ENCODE measurements at regions of chr5 and their contacts with region 1.

Region 1: GRCh38 chr5:134845852-134846640 is at the start of gene C5orf24:
- DNase-seq: peak; percentile 58 to 84
- H3K4me3 ChIP-seq: peak within 1 kb of the TSS; percentile 62 to 88 (median 72)
- H3K27ac ChIP-seq: peak within 1 kb of the TSS; percentile 66
- H3K4me1 ChIP-seq: no peaks in the 10 kb centered on the region
- H3K27me3 ChIP-seq: no peaks in the 10 kb centered on the region
- CTCF ChIP-seq: no peak
- EP300 ChIP-seq: peak in 1 of 2 experiments; percentile 15; a peak in 1 of 3 replicates
- POLR2A ChIP-seq: peak; percentile 82 to 86
- RAD21 ChIP-seq: no peak
- total RNA-seq, gene C5orf24: 19.6 and 20.2 TPM in 2 replicates

Region 2: DNA sequence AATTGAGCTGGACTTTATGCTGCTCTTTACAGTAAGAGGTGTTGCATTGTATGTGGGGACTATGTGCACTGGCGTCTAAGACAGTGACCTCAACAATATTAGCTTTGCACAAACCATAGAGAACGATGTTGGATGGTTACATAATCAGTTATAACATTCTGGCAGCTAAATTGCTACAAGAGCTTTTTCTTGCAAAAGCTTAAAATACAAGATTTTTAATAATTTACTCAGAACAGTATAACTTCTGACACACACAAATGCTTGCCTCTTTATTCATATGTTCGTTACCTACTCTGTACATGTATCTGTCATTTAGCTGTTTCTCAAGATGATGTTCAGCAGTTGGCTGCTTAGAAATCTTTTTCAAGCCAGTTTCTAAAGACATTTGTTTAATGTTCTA is 11.4 kb after region 1 on chr5:
- CTCF ChIA-PET with region 1: interaction called, 37 read pairs
- POLR2A ChIA-PET with region 1: interaction called, 12 read pairs
- DNase-seq: no peak
- H3K4me3 ChIP-seq: no peak overlapping the region
- H3K27ac ChIP-seq: no peak overlapping the region
- H3K4me1 ChIP-seq: no peaks in the 10 kb centered on the region
- H3K27me3 ChIP-seq: no peaks in the 10 kb centered on the region
- CTCF ChIP-seq: no peak
- EP300 ChIP-seq: no peak
- POLR2A ChIP-seq: no peak
- RAD21 ChIP-seq: no peak

Region 3: GRCh38 chr5:134873987-134874830 is 28.2 kb after region 1 on chr5 and contains the start of gene TXNDC15:
- CTCF ChIA-PET with region 1: no interaction called
- POLR2A ChIA-PET with region 1: interaction called, 17 read pairs
- DNase-seq: peak; percentile 61 to 89
- H3K4me3 ChIP-seq: peak within 1 kb of the TSS; percentile 73 to 93 (median 78)
- H3K27ac ChIP-seq: peak within 1 kb of the TSS; percentile 79; the same call in 1 of the 2 replicates
- H3K4me1 ChIP-seq: peaks cover 0 to 12% (median 8%) of the 10 kb centered on the region in 4 experiments; a peak in 6 of 7 replicates
- H3K27me3 ChIP-seq: no peaks in the 10 kb centered on the region
- CTCF ChIP-seq: no peak
- EP300 ChIP-seq: no peak
- POLR2A ChIP-seq: peak in 1 of 2 experiments; percentile 91; a peak in 2 of 3 replicates
- RAD21 ChIP-seq: no peak
- total RNA-seq, gene TXNDC15: 30.8 and 34.5 TPM in 2 replicates

Measured in H1 (cell line).